CD4-positive, alpha-beta memory T cell (primary cell): ENCODE measurements at regions of chr22 and their contacts with region 1.

Region 1: DNA sequence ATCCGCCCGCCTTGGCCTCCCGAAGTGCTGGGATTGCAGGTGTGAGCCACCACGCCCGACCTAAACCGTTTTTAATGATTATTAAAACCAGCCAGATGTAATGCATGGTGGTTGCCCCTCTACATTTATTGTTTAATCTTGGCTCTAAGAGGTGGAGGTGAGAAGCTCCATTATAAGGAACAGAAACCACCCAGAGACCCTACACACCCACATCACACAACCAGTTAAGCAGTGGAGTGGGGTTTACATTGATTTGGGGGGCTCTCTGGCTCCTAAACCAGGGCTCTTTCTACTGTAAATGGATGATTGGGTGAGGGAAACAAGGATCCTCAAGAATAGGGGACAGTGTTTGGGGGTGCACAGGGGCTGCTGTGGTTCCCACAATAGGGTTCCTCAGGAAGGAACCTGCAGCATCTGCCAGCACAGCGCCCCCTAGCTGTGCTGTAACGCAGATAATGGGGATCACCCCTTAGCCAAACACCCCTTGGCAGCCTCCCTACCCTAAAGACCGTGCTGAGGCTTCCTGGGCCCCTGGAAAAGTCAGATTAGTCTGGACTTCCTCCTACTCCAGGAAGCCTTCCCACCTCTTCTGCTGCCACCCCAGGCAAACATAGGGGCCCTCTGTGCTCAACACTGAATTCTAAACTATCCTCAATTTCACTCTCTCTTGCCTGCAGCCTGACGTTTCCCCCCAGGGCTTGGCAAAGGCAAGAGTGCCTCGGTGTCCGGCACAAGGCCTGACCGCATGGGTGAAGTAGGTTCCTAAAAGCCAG is 2.4 kb downstream of the MPST start:
- DNase-seq: peak in 4 of 5 donors; percentile 38 to 52 (median 42)
- H3K4me3 ChIP-seq: no peak overlapping the region
- H3K4me3 Mint-ChIP-seq: peak overlapping the region in 6 of 8 donors; percentile 12 to 92 (median 73)
- H3K27ac ChIP-seq: no peak overlapping the region
- H3K27ac Mint-ChIP-seq: peak overlapping the region in 3 of 7 donors; percentile 36 to 70 (median 39)
- H3K4me1 ChIP-seq: peaks cover 8% of the 10 kb centered on the region
- H3K4me1 Mint-ChIP-seq: peaks cover 4 to 24% (median 12%) of the 10 kb centered on the region in 4 donors
- H3K27me3 ChIP-seq: no peaks in the 10 kb centered on the region
- H3K27me3 Mint-ChIP-seq: peaks cover 0 to 5% of the 10 kb centered on the region in 2 donors

Region 2: DNA sequence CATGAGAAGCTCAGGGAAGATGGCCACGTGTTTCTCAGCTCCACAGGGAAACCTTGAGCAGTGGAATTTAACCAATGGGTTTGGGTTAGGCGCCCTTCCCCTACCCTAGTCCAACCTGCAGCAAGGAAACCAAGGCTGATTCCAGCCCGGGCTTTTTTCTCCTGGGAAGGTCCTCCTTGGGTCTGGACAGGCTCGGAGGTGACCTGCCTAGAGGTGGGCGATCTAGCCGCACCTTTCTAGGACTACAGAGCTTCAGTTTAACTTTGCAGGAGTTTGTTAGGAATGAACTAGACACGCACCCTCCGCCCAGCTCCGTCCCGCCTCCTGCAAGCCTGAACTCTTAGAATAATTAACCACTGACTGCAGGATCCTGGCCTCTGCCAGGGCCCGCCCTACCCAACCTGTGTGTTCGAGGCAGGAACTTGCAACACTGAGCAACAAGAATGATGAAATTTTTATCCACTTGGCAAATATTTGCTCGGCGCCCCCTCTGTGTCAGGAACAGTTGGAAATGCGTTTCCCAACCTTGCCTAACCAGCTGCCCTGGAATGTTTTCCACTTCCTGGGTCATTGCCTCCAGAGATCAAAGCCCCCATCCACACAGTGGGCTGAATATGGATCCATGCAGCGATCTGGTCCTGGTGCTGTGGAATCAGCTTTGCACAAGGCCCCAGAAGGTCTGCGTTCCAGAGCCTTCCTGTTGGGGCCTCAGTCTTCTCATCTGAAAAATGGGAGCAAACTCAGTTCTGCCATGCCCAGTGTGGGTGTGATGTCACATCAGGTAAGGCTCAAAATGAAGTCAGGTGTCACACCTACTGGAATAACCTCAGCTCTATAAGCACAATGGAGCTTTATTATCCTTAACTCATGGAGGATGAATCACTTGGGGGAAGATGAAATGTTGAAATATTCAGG is 10.9 kb after region 1 on chr22:
- CTCF ChIA-PET with region 1: interaction called, 13 read pairs
- POLR2A ChIA-PET with region 1: no interaction called
- intact Hi-C with region 1: no loop called
- DNase-seq: no peak
- H3K4me3 ChIP-seq: no peak overlapping the region
- H3K4me3 Mint-ChIP-seq: no peak overlapping the region
- H3K27ac ChIP-seq: no peak overlapping the region
- H3K27ac Mint-ChIP-seq: no peak overlapping the region
- H3K4me1 ChIP-seq: no peaks in the 10 kb centered on the region
- H3K4me1 Mint-ChIP-seq: no peaks in the 10 kb centered on the region
- H3K27me3 ChIP-seq: no peaks in the 10 kb centered on the region
- H3K27me3 Mint-ChIP-seq: peaks cover 3 to 12% of the 10 kb centered on the region in 2 donors